HCT116 (cell line): ENCODE measurements at regions of chr5 and their contacts with region 1.

Region 1: GRCh38 chr5:175534070-175534932 is 55.9 kb downstream of the SFXN1 start:
- DNase-seq: peak; percentile 51
- ATAC-seq: peak; percentile 96
- H3K4me3 ChIP-seq: no peak overlapping the region
- H3K27ac ChIP-seq: no peak overlapping the region
- H3K4me1 ChIP-seq: peaks cover 0 to 5% of the 10 kb centered on the region in 2 experiments; a peak in 1 of 4 replicates
- H3K27me3 ChIP-seq: no peaks in the 10 kb centered on the region
- CTCF ChIP-seq: peak; percentile 99 to 100 (median 100)
- POLR2A ChIP-seq: no peak
- RAD21 ChIP-seq: peak; percentile 99

Region 2: DNA sequence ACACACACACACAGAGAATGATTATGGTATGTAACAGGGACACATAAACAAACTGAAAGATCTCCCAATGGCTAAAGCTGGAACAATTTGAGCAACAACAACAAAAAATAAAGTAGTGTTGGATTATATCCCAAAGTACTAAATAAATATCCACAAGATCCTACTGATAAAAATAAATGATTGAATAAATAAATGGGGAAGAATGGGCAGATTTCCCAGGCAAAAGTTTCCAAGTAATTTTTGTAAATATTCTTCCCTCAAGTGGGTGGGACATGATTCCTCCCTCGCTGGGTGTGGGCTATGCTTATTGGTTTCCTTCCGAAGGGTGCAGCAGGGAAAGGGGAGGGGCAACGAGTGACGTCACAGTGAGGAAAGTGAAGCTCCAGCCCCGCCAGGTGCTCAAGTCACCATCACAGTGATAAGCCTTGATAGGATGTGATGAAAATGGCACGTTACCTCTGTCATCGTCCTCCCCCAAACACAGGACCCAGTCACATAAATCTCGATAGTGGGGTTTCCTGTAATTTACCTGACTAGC is 385.6 kb before region 1 on chr5:
- CTCF ChIA-PET with region 1: no interaction called
- POLR2A ChIA-PET with region 1: no interaction called
- RAD21 ChIA-PET with region 1: no interaction called
- intact Hi-C with region 1: no loop called
- DNase-seq: no peak
- ATAC-seq: no peak
- H3K4me3 ChIP-seq: no peak overlapping the region
- H3K27ac ChIP-seq: no peak overlapping the region
- H3K4me1 ChIP-seq: no peaks in the 10 kb centered on the region
- H3K27me3 ChIP-seq: no peaks in the 10 kb centered on the region
- CTCF ChIP-seq: no peak
- POLR2A ChIP-seq: no peak
- RAD21 ChIP-seq: no peak

Region 3: DNA sequence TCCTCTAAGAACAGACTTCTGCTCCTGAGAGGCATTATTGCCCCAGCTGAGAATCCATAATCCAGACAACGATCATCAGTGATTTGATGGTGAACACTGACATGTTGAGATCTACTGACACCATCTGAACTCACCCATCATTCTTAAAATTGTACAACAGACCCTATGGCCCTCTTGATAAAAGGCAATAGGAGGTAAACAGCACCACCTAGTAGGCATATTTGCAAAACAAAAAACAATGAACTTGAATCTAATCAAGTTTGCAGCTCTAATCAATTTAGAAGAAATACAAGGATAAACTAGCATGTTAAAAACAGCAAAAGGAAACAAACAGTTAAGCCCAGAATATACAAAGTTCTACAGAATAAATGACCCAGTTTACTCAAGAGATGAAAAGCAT is 33.7 kb after region 1 on chr5:
- CTCF ChIA-PET with region 1: interaction called, 14 read pairs
- POLR2A ChIA-PET with region 1: no interaction called
- RAD21 ChIA-PET with region 1: no interaction called
- intact Hi-C with region 1: loop called (anchors 5 kb)
- DNase-seq: peak; percentile 4
- ATAC-seq: no peak; the same call in 1 of the 2 replicates
- H3K4me3 ChIP-seq: no peak overlapping the region
- H3K27ac ChIP-seq: no peak overlapping the region
- H3K4me1 ChIP-seq: peaks cover 0 to 4% of the 10 kb centered on the region in 2 experiments; a peak in 1 of 4 replicates
- H3K27me3 ChIP-seq: peaks cover 7% of the 10 kb centered on the region
- CTCF ChIP-seq: peak in 2 of 3 experiments; percentile 44 to 74; a peak in 4 of 6 replicates
- POLR2A ChIP-seq: no peak
- RAD21 ChIP-seq: peak; percentile 70

Region 4: DNA sequence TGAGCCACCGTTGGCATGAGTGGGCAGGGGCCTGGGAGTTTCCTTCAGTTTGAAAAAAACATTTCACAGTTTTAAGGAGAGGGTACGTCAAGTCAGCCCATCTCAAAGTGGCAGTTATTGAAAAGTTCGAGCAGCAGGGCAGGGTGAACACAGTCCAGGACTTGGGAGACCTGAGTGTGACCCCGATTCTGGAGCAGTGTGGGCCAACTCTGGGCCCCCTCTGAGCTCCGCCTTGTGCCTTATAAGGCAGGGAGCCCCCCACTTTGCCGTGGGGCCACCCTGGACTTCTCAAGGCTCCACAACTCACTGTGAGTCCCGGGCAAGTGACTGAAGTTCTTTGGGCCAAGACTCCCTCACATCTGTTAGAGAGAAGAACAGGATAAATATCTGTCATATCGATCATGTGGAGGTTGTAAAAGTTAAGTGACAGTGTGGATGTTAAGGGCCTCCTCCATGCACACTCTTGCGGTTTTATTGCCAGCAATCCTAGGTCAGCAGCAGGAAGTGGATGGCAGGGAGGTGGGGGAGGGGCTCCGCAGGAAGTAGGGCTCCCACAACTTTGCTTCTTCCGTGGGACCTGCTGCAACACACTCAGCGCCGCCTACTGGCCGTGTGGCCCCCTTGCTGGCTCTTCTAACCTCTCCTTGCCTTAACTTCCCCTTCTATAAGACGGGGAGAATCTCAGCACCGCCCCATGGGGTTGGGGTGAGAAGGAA is 162.0 kb after region 1 on chr5:
- CTCF ChIA-PET with region 1: interaction called, 52 read pairs
- POLR2A ChIA-PET with region 1: no interaction called
- RAD21 ChIA-PET with region 1: interaction called in 1 of 2 experiments, 5 read pairs
- intact Hi-C with region 1: loop called (anchors 1 kb)
- DNase-seq: peak; percentile 76
- ATAC-seq: peak; percentile 92
- H3K4me3 ChIP-seq: peak overlapping the region; percentile 42 to 66
- H3K27ac ChIP-seq: peak overlapping the region; percentile 42
- H3K4me1 ChIP-seq: peaks cover 3 to 14% of the 10 kb centered on the region in 2 experiments; a peak in 3 of 4 replicates
- H3K27me3 ChIP-seq: 0 out of 2 replicates have a peak, but pooled peaks cover 2% of the 10 kb centered on the region
- CTCF ChIP-seq: peak; percentile 93 to 98 (median 96)
- POLR2A ChIP-seq: peak; percentile 33
- RAD21 ChIP-seq: peak; percentile 80

Region 5: DNA sequence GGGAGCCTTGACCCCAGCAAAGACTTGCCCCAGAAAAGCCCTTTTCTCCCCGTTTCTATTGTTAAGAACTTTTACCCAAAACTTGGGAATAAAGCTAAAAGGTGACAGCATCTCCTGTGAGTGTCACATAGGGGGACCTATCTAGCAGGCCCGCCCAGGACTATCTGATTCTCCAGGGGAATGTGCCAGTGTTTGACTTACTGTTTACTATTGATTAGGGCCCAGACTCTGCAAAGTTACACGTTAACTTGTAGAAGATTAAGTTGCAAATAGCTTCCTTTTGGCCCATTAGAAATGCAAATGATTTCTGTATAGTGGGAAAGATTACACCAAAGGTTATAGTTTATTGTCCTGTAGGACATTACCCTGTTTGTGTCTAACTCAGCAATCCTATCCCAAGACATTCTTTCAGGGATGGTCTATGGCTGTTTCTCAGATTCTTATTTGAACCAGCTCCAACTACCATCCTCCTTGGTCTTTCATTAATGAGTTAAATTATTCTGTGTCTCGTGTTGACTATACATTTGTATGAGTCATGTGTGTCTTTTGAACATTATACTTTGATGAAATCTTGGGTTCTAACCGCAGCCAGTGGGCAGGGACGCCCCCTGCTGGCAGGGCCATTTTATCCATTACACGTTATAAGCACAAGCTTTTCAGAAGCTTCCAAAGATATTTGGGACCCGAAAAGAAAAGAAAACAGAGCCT is 184.3 kb after region 1 on chr5:
- CTCF ChIA-PET with region 1: interaction called, 45 read pairs
- POLR2A ChIA-PET with region 1: no interaction called
- RAD21 ChIA-PET with region 1: interaction called in 1 of 2 experiments, 5 read pairs
- intact Hi-C with region 1: loop called (anchors 1 kb)
- DNase-seq: peak; percentile 16
- ATAC-seq: peak; percentile 52; the same call in 1 of the 2 replicates
- H3K4me3 ChIP-seq: no peak overlapping the region
- H3K27ac ChIP-seq: no peak overlapping the region
- H3K4me1 ChIP-seq: no peaks in the 10 kb centered on the region
- H3K27me3 ChIP-seq: no peaks in the 10 kb centered on the region
- CTCF ChIP-seq: peak; percentile 79 to 88 (median 86)
- POLR2A ChIP-seq: no peak
- RAD21 ChIP-seq: peak; percentile 78

Region 6: GRCh38 chr5:175724311-175725275 is 190.3 kb after region 1 on chr5:
- CTCF ChIA-PET with region 1: interaction called, 45 read pairs
- POLR2A ChIA-PET with region 1: no interaction called
- RAD21 ChIA-PET with region 1: interaction called, 4 to 5 read pairs
- intact Hi-C with region 1: no loop called
- DNase-seq: no peak
- ATAC-seq: no peak
- H3K4me3 ChIP-seq: no peak overlapping the region
- H3K27ac ChIP-seq: no peak overlapping the region
- H3K4me1 ChIP-seq: no peaks in the 10 kb centered on the region
- H3K27me3 ChIP-seq: no peaks in the 10 kb centered on the region
- CTCF ChIP-seq: no peak
- POLR2A ChIP-seq: no peak
- RAD21 ChIP-seq: no peak